Spleen (tissue), 13 donors: ENCODE measurements at regions of chr3 and their contacts with region 1.

Region 1: DNA sequence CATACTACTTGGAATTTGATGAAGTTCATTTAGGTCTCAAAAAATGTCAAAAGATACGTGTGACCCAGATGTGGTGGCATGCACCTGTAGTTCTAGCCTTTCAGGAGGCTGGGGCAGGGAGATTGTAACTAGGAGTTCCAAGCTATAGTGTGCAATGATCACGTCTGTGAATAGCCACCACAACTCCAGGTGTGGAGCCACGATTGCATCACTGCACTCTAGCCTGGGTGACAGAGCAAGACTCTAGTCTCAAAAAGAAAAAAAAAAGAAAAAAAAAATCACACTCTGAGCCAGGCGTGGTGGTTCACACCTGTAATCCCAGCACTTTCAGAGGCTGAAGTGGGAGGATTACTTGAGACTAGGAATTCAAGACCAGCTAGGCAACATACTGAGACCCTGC is 14.2 kb downstream of the MAP4 start:
- DNase-seq: no peak
- H3K4me3 ChIP-seq: no peak overlapping the region
- H3K27ac ChIP-seq: no peak overlapping the region
- H3K4me1 ChIP-seq: peaks cover 0 to 9% (median 0%) of the 10 kb centered on the region in 6 donors
- H3K27me3 ChIP-seq: no peaks in the 10 kb centered on the region
- CTCF ChIP-seq: no peak
- POLR2A ChIP-seq: no peak

Region 2: DNA sequence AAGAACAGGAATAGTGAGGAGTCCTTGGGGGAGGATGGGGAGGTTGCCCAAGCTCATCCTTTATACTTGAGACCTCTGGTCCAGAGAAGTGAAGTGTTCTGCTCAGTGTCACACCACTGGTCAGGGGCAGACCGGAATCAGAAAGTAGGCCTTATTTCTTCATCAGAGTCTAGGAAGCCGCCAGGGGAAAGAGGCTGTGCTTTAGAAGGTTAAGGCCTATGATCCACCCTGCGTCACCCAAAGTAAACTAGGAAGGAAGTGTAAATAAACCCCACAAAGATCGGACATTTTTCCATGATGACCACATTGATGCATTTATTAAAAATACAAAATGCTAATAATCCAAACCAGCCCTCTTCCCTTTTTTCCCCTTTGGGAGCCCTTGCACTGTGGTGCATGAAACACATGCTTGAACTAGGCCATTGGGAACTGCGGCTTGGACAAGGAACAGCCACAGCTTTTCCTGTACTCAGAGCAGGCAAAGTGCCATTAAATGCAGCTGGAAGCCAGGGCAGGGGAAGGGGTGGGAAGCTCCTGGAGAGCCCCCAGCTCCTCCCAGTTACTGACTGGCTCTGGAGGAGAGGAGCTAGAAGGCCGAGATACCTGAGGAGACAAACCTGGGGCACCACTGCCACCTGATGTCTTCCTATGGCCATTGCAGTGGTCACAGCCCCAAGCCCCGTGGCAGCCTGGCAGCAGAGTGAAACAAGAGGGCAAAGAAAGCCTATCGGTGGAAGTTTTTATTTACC is 149.2 kb after region 1 on chr3:
- intact Hi-C with region 1: loop called (anchors 10 kb)
- DNase-seq: peak; percentile 87
- H3K4me3 ChIP-seq: no peak overlapping the region
- H3K27ac ChIP-seq: peak overlapping the region in 6 of 8 donors; percentile 28 to 62 (median 44)
- H3K4me1 ChIP-seq: peaks cover 0 to 19% (median 12%) of the 10 kb centered on the region in 6 donors
- H3K27me3 ChIP-seq: no peaks in the 10 kb centered on the region
- CTCF ChIP-seq: peak; percentile 55 to 90 (median 84)
- POLR2A ChIP-seq: no peak